MCF 10A (cell line): ENCODE measurements at regions of chr11 and their contacts with region 1.

Region 1: DNA sequence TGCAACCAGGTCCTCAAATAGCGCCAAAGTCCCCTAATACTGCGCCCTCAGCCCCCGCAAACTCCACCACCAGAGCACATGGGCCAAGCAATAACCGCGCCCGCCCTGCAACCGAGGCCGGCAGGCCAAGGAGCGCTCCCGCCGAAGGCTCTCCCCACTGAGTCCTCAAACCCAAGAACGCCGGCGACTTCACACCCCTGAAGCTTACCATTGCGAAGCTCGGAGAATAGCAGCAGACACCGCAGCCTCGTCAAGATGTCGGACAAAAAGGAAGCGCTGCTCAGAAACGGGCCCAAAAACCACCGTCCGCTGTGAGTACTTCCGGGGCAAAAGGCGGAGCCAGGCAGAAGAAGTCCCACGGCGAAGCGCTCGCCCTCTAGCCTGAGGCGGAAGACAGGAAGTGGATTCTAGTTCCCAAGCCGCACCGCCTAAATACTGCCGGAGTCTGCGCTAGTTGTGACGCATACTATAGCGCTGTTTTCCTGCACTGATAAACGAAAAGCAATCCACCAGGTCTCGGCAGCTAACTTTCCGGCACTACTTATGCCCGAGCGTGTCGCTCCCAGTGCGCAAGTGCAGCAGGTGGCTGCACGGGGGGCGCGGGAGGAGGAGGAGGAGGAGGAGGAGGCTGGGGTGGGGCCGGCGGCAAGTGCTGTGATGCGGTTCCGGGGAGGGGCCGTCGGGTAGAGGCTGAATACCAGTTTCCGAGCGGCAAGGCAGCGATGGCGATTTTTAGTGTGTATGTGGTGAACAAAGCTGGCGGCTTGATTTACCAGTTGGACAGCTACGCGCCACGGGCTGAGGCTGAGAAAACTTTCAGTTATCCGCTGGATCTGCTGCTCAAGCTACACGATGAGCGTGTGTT is at the starts of genes RPS25 and TRAPPC4:
- DNase-seq: peak; percentile 97
- H3K4me3 Mint-ChIP-seq: peak within 1 kb of the TSS; percentile 94
- H3K27ac Mint-ChIP-seq: peak within 1 kb of the TSS; percentile 98
- H3K4me1 Mint-ChIP-seq: peaks cover 22% of the 10 kb centered on the region
- H3K27me3 Mint-ChIP-seq: no peaks in the 10 kb centered on the region
- CTCF ChIP-seq: no peak
- total RNA-seq, gene RPS25: 1,252 and 1,255 TPM in 2 replicates
- total RNA-seq, gene TRAPPC4: 78.6 and 96.5 TPM in 2 replicates

Region 2: GRCh38 chr11:118907051-118908042 is 111.0 kb before region 1 on chr11:
- CTCF ChIA-PET with region 1: interaction called, 3 read pairs
- POLR2A ChIA-PET with region 1: interaction called, 4 read pairs
- intact Hi-C with region 1: loop called (anchors 5 kb)
- DNase-seq: peak; percentile 85
- H3K4me3 Mint-ChIP-seq: peak overlapping the region; percentile 33
- H3K27ac Mint-ChIP-seq: no peak overlapping the region
- H3K4me1 Mint-ChIP-seq: peaks cover 47% of the 10 kb centered on the region
- H3K27me3 Mint-ChIP-seq: no peaks in the 10 kb centered on the region
- CTCF ChIP-seq: peak; percentile 94

Region 3: GRCh38 chr11:118997627-118998387 is 20.5 kb before region 1 on chr11 and contains the start of gene CENATAC:
- CTCF ChIA-PET with region 1: interaction called, 10 read pairs
- POLR2A ChIA-PET with region 1: interaction called, 286 read pairs
- intact Hi-C with region 1: no loop called
- DNase-seq: peak; percentile 91
- H3K4me3 Mint-ChIP-seq: peak within 1 kb of the TSS; percentile 95
- H3K27ac Mint-ChIP-seq: peak within 1 kb of the TSS; percentile 70
- H3K4me1 Mint-ChIP-seq: peaks cover 5% of the 10 kb centered on the region
- H3K27me3 Mint-ChIP-seq: no peaks in the 10 kb centered on the region
- CTCF ChIP-seq: no peak
- total RNA-seq, gene CENATAC: 48.0 and 49.0 TPM in 2 replicates

Region 4: GRCh38 chr11:119030329-119031049 is 12.2 kb after region 1 on chr11 and contains the start of gene SLC37A4:
- CTCF ChIA-PET with region 1: interaction called, 7 read pairs
- POLR2A ChIA-PET with region 1: interaction called, 65 read pairs
- intact Hi-C with region 1: no loop called
- DNase-seq: peak; percentile 97
- H3K4me3 Mint-ChIP-seq: peak within 1 kb of the TSS; percentile 75
- H3K27ac Mint-ChIP-seq: peak within 1 kb of the TSS; percentile 70
- H3K4me1 Mint-ChIP-seq: peaks cover 15% of the 10 kb centered on the region
- H3K27me3 Mint-ChIP-seq: no peaks in the 10 kb centered on the region
- CTCF ChIP-seq: peak; percentile 71
- total RNA-seq, gene SLC37A4: 6.8 and 10.0 TPM in 2 replicates

Region 5: GRCh38 chr11:119057000-119057769 is 38.9 kb after region 1 on chr11 and contains the start of gene HYOU1:
- CTCF ChIA-PET with region 1: interaction called, 4 read pairs
- POLR2A ChIA-PET with region 1: interaction called, 40 read pairs
- intact Hi-C with region 1: loop called (anchors 1 kb)
- DNase-seq: peak; percentile 97
- H3K4me3 Mint-ChIP-seq: peak within 1 kb of the TSS; percentile 96
- H3K27ac Mint-ChIP-seq: peak within 1 kb of the TSS; percentile 98
- H3K4me1 Mint-ChIP-seq: peaks cover 19% of the 10 kb centered on the region
- H3K27me3 Mint-ChIP-seq: no peaks in the 10 kb centered on the region
- CTCF ChIP-seq: peak; percentile 29
- total RNA-seq, gene HYOU1: 398 and 664 TPM in 2 replicates

Region 6: DNA sequence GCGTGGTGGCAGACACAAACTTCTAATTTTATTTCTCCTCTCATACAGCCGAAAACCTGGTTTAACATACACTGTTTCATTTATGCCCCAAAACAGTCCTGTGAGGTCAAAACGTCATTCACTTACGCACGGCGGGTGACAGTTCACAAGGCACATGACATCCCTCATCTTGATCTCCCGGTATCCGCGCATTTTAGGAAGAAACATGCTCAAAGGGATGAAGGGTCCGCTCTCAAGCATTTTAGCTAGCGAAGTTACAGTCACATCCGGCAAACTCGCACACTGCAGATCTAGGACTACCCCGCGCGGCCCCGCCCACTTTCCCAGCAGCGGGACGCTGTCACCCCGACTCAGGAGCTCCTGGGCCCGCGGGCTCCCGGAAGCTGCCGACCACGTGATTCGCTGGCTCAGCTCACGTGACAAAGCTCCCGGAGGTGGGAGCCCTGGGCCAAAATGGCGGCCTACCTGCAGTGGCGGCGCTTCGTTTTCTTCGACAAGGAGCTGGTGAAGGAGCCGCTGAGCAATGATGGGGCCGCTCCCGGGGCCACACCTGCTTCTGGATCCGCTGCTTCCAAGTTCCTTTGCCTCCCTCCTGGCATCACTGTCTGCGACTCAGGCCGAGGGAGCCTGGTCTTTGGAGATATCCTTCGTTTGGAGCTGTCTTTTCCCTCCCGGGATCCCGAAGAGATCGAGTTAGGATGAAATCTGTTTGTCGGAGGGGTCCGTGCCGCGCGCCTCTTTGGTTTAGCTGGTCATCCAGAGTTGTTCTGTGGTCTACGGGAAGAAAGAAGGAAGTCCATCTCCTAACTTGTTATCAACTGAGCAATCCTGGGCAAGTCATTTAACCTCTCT is 49.3 kb after region 1 on chr11 and contains the start of gene VPS11:
- CTCF ChIA-PET with region 1: interaction called, 3 read pairs
- POLR2A ChIA-PET with region 1: interaction called, 29 read pairs
- intact Hi-C with region 1: no loop called
- DNase-seq: peak; percentile 95
- H3K4me3 Mint-ChIP-seq: peak within 1 kb of the TSS; percentile 87
- H3K27ac Mint-ChIP-seq: peak within 1 kb of the TSS; percentile 76
- H3K4me1 Mint-ChIP-seq: peaks cover 7% of the 10 kb centered on the region
- H3K27me3 Mint-ChIP-seq: no peaks in the 10 kb centered on the region
- CTCF ChIP-seq: no peak
- total RNA-seq, gene VPS11: 16.2 and 21.8 TPM in 2 replicates

Region 7: DNA sequence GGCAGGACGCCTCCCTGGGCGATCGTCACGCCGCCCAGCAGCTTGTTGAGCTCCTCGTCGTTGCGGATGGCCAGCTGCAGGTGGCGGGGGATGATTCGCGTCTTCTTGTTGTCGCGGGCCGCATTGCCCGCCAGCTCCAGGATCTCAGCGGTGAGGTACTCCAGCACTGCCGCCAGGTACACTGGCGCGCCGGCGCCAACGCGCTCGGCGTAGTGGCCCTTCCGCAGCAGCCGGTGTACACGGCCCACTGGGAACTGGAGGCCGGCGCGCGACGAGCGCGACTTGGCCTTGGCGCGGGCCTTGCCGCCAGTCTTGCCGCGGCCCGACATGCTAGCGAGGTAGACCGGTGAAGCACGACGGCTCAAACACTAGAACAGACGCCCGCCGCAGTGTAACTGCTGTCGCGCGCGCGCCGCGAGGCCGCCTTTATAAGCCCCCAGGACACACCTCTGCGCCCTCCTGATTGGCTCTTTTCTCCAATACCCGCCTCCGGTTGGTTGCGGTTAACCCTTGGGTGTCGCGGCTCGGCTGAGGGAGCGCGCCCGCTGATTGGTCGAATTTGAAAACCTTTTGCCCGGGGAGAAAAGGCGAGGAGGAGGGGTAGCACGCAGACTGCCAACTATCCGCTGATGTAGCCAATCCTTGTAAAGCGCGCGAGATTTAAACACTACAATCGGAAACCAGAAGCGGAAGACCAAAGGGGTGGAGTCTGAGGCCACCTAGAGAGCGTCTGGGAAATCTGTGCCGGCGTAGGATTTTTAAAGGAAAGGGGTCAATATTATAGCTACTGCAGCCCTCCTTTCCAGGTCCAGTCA is 77.0 kb after region 1 on chr11:
- CTCF ChIA-PET with region 1: interaction called, 3 read pairs
- POLR2A ChIA-PET with region 1: interaction called, 16 read pairs
- intact Hi-C with region 1: loop called (anchors 2 kb)
- DNase-seq: peak; percentile 100
- H3K4me3 Mint-ChIP-seq: peak overlapping the region; percentile 89
- H3K27ac Mint-ChIP-seq: peak overlapping the region; percentile 89
- H3K4me1 Mint-ChIP-seq: peaks cover 26% of the 10 kb centered on the region
- H3K27me3 Mint-ChIP-seq: no peaks in the 10 kb centered on the region
- CTCF ChIP-seq: peak; percentile 1

Region 8: GRCh38 chr11:119121008-119121810 is 102.9 kb after region 1 on chr11 and contains the start of gene HINFP:
- CTCF ChIA-PET with region 1: no interaction called
- POLR2A ChIA-PET with region 1: no interaction called
- intact Hi-C with region 1: no loop called
- DNase-seq: peak; percentile 99
- H3K4me3 Mint-ChIP-seq: peak within 1 kb of the TSS; percentile 79
- H3K27ac Mint-ChIP-seq: peak within 1 kb of the TSS; percentile 85
- H3K4me1 Mint-ChIP-seq: peaks cover 25% of the 10 kb centered on the region
- H3K27me3 Mint-ChIP-seq: no peaks in the 10 kb centered on the region
- CTCF ChIP-seq: no peak
- total RNA-seq, gene HINFP: 23.4 and 26.2 TPM in 2 replicates